Ascending aorta (tissue), 2 donors: ENCODE measurements at regions of chr7 and their contacts with region 1.

Region 1: DNA sequence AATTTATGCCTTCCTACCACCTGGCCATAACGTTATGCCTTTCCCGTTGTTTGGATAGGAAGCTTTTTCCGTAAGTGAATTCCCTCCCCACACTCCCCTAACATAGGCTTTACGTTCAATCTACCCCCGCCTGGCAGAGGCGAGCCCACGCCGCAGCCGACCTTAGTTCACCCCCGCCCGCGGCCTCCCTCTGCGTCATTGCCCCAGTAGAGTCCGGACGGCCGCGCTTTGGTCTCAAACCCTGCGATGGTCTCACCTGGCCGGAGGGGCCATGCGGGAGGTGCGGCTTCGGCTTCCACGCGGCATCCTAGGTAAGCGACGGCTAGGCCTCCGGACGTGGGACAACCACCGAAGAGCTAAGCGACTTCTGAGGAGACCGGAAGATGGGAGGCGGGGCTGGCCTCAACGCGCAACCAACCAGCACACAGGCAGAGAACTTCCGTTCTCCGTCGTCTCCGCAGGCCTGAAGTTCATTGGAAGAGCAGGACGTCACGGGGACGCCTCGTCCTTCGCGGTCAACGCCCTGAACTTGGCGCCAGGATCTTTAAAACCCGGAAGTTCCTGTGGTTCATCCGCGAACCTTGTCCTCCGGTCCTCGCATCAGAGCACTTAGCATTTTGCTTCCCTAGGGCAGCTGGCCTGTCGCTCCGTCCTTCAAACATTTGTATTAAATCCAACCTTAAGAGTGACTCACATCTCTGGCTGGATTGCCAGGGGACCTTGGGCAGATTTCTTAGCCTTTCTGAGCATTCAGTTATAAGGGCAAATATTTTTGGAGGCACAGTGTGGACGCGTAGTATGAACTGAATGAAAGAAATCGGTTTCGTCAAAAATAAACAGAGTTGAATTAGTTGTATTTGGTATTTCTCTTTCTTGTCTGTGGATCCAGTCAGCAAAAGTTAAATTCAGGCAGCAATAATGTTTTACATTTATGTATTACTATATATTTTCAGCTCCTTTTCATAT is at the start of gene CHCHD2:
- DNase-seq: peak; percentile 94 to 99
- H3K4me3 ChIP-seq: peak within 1 kb of the TSS; percentile 70 to 74
- H3K27ac ChIP-seq: peak within 1 kb of the TSS; percentile 89 to 93
- H3K4me1 ChIP-seq: peaks cover 0 to 12% of the 10 kb centered on the region in 2 donors
- H3K27me3 ChIP-seq: no peaks in the 10 kb centered on the region
- CTCF ChIP-seq: no peak
- total RNA-seq, gene CHCHD2: 323 TPM

Region 2: GRCh38 chr7:55887821-55888247 is 218.6 kb before region 1 on chr7:
- intact Hi-C with region 1: loop called (anchors 2 kb)
- DNase-seq: no peak
- H3K4me3 ChIP-seq: peak overlapping the region; percentile 59 to 75
- H3K27ac ChIP-seq: peak overlapping the region in 1 of 2 donors; percentile 65
- H3K4me1 ChIP-seq: peaks cover 0 to 8% of the 10 kb centered on the region in 2 donors
- H3K27me3 ChIP-seq: no peaks in the 10 kb centered on the region
- CTCF ChIP-seq: no peak

Region 3: DNA sequence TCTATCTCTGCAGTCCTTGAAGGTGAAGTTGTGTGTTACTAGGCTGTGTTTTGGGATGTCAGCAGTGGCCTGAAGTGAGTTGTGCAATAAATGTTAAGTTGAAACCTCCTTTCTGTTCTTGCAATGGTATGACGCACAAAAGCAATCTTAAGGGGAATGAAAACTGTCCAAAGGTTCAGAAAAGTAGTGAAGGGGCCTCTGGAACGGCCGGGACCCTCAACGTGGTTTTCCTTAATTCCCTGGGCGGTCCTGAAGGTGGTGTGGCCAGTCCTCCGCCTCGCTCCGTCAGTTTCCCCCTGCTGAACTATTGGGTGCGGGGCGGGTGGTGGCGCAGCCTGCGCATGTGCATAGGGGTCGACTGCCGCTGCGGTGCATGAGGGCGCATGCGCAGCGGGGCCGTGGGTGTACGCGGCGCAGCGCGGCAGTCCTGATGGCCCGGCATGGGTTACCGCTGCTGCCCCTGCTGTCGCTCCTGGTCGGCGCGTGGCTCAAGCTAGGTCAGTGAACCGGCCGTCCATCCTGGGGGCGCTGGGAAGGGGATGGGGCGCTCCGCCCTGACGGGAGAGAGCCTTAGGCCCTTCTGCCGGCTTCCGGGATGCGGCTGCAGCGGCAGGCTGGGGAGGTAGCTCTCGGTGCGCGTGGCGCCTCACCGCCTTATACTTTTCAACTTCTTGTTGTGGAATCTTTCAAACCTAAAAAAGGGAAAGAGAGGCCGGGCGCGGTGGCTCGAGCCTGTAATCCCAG is 42.3 kb before region 1 on chr7 and contains the start of gene SUMF2:
- intact Hi-C with region 1: loop called (anchors 1 kb)
- DNase-seq: peak; percentile 67 to 95
- H3K4me3 ChIP-seq: peak within 1 kb of the TSS; percentile 80 to 98
- H3K27ac ChIP-seq: peak within 1 kb of the TSS; percentile 93
- H3K4me1 ChIP-seq: peaks cover 0 to 7% of the 10 kb centered on the region in 2 donors
- H3K27me3 ChIP-seq: no peaks in the 10 kb centered on the region
- CTCF ChIP-seq: peak in 1 of 3 experiments; percentile 33
- total RNA-seq, gene SUMF2: 74.6 TPM

Region 4: DNA sequence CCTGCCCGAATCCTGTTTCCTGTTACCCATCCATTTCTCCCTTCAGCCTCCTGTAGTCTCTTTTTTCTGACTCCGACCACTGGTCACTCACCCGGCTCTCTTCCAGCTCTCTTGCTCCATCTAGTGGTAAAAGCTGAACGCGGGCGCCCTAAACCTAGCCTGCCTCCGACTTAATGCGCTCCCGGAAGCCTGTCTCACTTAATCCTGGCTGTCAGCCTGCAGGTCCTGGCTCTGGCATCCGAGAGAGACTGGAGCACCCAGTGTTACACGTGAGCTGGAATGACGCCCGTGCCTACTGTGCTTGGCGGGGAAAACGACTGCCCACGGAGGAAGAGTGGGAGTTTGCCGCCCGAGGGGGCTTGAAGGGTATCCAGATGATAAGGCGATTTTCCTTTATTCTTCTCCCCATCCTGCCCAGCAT is 32.0 kb before region 1 on chr7:
- intact Hi-C with region 1: no loop called
- DNase-seq: peak; percentile 49 to 95
- H3K4me3 ChIP-seq: no peak overlapping the region
- H3K27ac ChIP-seq: peak overlapping the region; percentile 49 to 67
- H3K4me1 ChIP-seq: peaks cover 3 to 10% of the 10 kb centered on the region in 2 donors
- H3K27me3 ChIP-seq: no peaks in the 10 kb centered on the region
- CTCF ChIP-seq: peak; percentile 84 to 92 (median 85)

Region 5: DNA sequence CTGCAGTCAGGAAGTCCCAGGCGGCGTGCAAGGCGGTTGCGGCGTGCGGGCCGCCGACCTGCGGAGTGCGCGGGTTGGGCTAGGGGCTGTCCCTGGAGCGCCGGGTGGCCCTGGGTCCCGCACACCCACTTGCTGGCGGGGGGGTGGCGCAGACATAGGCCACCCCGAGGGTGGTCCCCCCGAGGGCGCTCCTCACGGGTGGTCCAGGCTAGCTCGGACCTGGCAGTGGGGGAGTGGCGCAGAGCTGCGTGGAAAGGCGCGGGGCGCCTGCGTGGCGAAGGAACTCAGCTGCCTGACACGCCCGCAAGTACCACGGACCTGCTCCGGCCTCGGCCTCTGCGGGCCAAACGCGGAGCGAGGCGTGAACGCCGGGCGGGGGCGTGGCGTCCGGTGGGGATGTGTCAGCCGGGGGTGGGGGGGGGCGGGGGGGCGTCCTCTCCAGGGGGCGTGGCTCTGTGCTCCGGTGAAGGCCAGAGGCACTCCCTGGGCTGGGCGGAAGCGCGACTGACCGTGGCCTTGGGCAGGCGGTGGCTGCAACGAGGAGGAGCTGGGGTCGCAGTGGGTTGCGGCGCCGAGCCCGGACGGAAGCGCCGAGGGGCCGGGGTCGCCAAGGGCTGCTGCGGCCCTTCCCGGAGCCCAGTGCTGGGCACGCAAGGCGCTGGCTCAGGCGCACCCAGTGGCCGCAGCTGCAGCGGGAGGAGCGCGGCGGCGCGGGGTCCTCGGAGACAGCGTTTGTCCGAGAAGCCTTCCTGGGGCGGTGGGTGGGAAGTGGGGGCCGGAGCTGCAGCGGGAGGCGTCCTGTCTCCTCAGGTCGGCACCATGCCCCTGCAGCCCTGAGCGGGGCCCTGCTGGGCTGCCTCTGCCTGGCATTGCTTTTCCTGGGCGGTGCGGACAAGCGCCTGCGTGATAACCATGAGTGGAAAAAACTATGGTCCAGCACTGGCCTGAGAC is 68.7 kb after region 1 on chr7:
- intact Hi-C with region 1: loop called (anchors 5 kb)
- DNase-seq: peak in 1 of 2 donors; percentile 82
- H3K4me3 ChIP-seq: peak overlapping the region; percentile 69 to 81
- H3K27ac ChIP-seq: peak overlapping the region; percentile 71
- H3K4me1 ChIP-seq: no peaks in the 10 kb centered on the region
- H3K27me3 ChIP-seq: no peaks in the 10 kb centered on the region
- CTCF ChIP-seq: no peak

Region 6: DNA sequence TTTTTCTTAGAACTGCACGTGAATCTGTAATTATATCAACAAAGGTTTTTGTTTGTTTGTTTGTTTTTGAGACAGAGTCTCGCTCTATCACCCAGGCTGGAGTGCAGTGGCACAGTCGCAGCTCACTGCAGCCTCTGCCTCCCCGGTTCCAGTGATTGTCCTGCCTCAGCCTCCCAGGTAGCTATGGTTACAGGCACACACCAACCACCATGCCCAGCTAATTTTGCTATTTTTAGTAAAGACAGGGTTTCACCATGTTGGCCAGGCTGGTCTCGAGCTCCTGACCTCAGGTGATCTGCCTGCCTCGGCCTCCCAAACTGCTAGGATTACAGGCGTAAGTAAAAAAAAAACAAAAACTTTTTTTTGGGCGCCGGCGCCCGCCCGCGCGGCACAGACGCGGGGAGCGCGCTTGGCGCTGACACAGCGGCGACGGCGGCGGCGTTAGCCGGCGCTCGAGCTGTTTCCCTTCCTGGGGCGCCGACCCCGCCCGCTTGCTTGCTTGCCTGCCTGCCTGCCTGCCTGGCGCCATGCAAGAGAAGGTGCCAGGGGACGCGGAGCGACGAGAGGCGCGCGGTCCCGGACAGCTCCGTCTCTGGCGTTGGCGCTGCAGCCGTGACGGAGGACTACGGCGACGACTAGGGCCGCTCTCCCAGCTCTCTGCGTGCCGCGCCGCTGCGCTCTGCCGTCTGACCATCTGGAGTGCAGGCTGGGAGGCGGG is 181.2 kb after region 1 on chr7:
- intact Hi-C with region 1: loop called (anchors 5 kb)
- DNase-seq: peak; percentile 10 to 72
- H3K4me3 ChIP-seq: peak overlapping the region; percentile 52 to 66
- H3K27ac ChIP-seq: peak overlapping the region; percentile 80 to 83
- H3K4me1 ChIP-seq: no peaks in the 10 kb centered on the region
- H3K27me3 ChIP-seq: no peaks in the 10 kb centered on the region
- CTCF ChIP-seq: no peak